ENCODE measurements at regions of chr6 and their contacts with region 1.

Region 1: DNA sequence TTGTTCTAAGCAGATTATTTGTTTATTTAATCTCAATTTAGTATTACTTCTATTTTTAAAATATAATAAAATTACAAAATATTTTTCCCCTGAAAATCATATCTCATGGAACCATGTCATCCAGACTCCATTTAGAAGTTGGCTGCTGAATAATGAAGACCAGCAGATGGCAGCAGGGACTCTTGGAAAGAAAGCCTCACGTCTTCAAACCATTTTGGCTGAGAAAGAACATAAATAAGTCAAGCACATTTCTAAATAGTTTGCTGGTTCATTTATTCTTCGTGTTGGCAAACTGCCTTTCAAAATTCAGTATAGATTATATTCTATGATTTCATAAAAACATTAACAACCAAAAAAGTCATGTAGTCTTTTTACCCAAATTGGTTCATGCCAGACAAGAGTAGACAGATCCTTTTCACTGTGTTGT is 71.7 kb downstream of the RCAN2 start:
- DNase-seq: peak; percentile 66
- ATAC-seq: 0 out of 3 replicates have a peak, but pooled peaks have one; percentile 44
- H3K4me3 ChIP-seq: no peak overlapping the region
- H3K27ac ChIP-seq: no peak overlapping the region
- H3K4me1 ChIP-seq: no peaks in the 10 kb centered on the region
- H3K27me3 ChIP-seq: no peaks in the 10 kb centered on the region
- CTCF ChIP-seq: peak; percentile 74
- EP300 ChIP-seq: no peak
- POLR2A ChIP-seq: no peak
- RAD21 ChIP-seq: peak; percentile 49; the same call in 1 of the 2 replicates

Region 2: DNA sequence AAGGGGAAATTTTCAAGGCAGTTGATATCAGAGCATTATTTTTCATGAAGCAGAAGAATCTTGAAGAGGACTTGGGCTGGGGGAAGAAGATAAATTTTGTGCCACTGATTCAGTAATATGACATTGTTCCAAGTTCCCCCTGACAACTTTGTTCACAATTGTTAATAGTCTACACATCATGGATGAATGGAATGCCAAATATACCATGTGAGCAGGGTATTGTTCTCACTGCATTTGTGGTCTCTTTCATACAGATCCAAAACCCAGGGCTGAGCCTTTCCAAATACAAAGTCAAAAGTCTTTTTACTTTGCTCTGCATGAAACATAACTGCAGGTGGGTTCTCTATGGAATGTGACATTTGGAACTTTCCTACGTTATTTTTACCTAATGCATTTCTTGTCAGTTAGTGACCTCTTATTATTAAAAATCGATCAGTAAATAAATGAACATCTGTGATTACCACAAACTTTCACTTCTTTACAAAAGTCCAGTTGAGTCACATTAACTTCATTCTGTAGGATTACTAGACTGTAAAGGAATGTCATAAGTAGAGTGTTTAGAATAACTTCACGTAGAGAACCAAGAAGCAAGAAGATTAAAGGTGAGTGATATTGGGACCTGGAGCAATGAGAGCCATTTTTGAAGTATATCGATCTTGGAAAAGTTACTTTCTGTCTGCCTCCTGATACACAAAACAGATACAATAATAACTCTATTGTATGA is 29.3 kb before region 1 on chr6:
- CTCF ChIA-PET with region 1: no interaction called
- POLR2A ChIA-PET with region 1: no interaction called
- in situ Hi-C with region 1: no loop called
- intact Hi-C with region 1: no loop called
- DNase-seq: no peak
- ATAC-seq: no peak
- H3K4me3 ChIP-seq: no peak overlapping the region
- H3K27ac ChIP-seq: no peak overlapping the region
- H3K4me1 ChIP-seq: no peaks in the 10 kb centered on the region
- H3K27me3 ChIP-seq: no peaks in the 10 kb centered on the region
- CTCF ChIP-seq: no peak
- EP300 ChIP-seq: no peak
- POLR2A ChIP-seq: no peak
- RAD21 ChIP-seq: no peak

Region 3: DNA sequence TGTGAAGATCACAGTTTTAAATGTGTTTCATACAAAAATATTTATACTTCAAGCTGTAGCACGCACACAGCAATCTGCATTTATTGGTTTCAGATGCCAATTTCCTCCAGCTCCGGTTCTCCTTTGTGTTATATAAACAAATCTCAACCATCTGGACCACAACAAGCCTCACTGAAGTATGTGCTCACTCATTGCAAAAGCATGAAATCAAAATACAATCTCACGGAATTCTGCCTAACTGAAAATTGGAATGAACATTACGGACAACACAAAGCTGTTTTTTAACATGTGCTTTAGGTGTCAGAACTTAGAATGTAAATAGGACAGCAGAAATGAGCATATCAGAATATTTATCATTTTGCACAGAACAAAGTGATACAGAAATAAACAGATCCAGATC is 33.6 kb after region 1 on chr6:
- CTCF ChIA-PET with region 1: no interaction called
- POLR2A ChIA-PET with region 1: no interaction called
- in situ Hi-C with region 1: no loop called
- intact Hi-C with region 1: no loop called
- DNase-seq: no peak
- ATAC-seq: no peak
- H3K4me3 ChIP-seq: no peak overlapping the region
- H3K27ac ChIP-seq: no peak overlapping the region
- H3K4me1 ChIP-seq: no peaks in the 10 kb centered on the region
- H3K27me3 ChIP-seq: no peaks in the 10 kb centered on the region
- CTCF ChIP-seq: no peak
- EP300 ChIP-seq: no peak
- POLR2A ChIP-seq: no peak
- RAD21 ChIP-seq: no peak

Region 4: GRCh38 chr6:46491628-46492547 is 72.3 kb after region 1 on chr6:
- CTCF ChIA-PET with region 1: interaction called, 3 read pairs
- POLR2A ChIA-PET with region 1: no interaction called
- in situ Hi-C with region 1: no loop called
- intact Hi-C with region 1: loop called (anchors 1 kb)
- DNase-seq: peak; percentile 6
- ATAC-seq: peak; percentile 95
- H3K4me3 ChIP-seq: peak overlapping the region; percentile 50 to 75 (median 73)
- H3K27ac ChIP-seq: no peak overlapping the region
- H3K4me1 ChIP-seq: peaks cover 5% of the 10 kb centered on the region
- H3K27me3 ChIP-seq: peaks cover 4 to 33% of the 10 kb centered on the region in 2 experiments; a peak in 4 of 5 replicates
- CTCF ChIP-seq: peak; percentile 72
- EP300 ChIP-seq: no peak
- POLR2A ChIP-seq: no peak
- RAD21 ChIP-seq: peak; percentile 48; the same call in 1 of the 2 replicates

Region 5: DNA sequence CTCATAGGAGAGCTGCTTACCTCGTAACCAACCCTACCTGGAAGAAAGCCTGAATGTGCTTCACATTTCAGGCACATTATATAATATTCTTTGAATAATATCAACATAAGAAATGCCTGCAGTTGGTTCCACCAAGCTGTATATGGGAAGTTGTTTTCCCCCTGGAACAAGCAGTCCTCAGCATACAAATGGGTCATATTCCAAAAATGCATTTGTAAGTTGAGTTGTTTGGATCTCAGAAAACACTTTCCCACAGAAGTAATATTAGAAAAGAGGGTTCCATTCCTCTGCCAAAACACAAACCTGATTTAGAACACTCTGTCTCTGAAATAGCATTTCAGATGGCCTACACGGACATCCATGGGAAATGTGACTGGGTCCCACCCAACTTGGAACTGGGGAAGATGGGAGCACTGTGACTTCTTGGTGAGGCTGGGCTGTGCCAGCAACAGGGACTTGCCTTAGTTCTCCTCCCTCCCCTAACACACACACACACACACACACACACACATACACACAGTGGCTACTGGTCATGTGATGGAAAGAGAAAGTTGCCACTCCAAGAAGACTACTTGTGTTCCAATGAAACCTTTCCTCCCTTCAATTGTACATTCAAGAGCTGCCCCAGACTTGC is 83.0 kb after region 1 on chr6:
- CTCF ChIA-PET with region 1: no interaction called
- POLR2A ChIA-PET with region 1: no interaction called
- in situ Hi-C with region 1: no loop called
- intact Hi-C with region 1: no loop called
- DNase-seq: no peak
- ATAC-seq: no peak
- H3K4me3 ChIP-seq: no peak overlapping the region
- H3K27ac ChIP-seq: no peak overlapping the region
- H3K4me1 ChIP-seq: no peaks in the 10 kb centered on the region
- H3K27me3 ChIP-seq: no peaks in the 10 kb centered on the region
- CTCF ChIP-seq: no peak
- EP300 ChIP-seq: no peak
- POLR2A ChIP-seq: no peak
- RAD21 ChIP-seq: no peak

Region 6: DNA sequence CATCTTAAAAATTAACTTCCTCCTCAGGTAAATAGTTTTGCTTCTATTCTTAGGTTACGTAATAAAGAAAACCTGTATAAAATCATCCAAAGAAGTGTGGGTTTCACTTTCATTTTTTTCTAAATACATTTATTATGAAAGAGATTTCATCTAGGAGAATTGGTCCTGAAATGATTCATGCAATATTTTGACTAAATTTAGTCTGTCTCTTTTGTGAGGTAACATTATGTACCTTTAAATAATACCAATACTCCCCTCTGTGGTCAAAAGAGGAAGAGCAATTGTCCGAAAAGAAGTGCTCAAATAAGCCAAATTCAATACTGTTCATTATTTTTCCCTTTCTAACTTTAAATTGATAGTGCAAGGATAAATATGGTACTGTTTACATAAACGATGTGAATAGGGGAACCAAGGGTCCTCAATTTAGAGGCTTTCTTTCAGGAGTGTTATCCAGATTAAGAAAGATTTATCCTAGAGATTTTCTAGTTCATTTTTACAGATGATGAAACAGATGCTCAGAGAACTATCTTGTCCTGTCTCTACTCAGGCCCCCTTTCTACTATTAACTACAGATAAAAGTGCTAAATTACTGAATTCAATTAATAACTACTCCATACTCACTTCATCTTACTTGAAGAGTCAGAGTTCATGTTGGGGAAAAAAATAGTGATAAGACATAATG is 206.8 kb after region 1 on chr6:
- CTCF ChIA-PET with region 1: interaction called, 26 read pairs
- POLR2A ChIA-PET with region 1: no interaction called
- in situ Hi-C with region 1: loop called (anchors 10 kb)
- intact Hi-C with region 1: loop called (anchors 1 kb)
- DNase-seq: peak; percentile 33
- ATAC-seq: peak; percentile 58
- H3K4me3 ChIP-seq: no peak overlapping the region
- H3K27ac ChIP-seq: no peak overlapping the region
- H3K4me1 ChIP-seq: no peaks in the 10 kb centered on the region
- H3K27me3 ChIP-seq: no peaks in the 10 kb centered on the region
- CTCF ChIP-seq: peak; percentile 63
- EP300 ChIP-seq: no peak
- POLR2A ChIP-seq: no peak
- RAD21 ChIP-seq: no peak

Region 7: GRCh38 chr6:46637145-46637544 is 217.6 kb after region 1 on chr6:
- CTCF ChIA-PET with region 1: no interaction called
- POLR2A ChIA-PET with region 1: no interaction called
- in situ Hi-C with region 1: loop called (anchors 10 kb)
- intact Hi-C with region 1: no loop called
- DNase-seq: no peak
- ATAC-seq: no peak
- H3K4me3 ChIP-seq: no peak overlapping the region
- H3K27ac ChIP-seq: no peak overlapping the region
- H3K4me1 ChIP-seq: no peaks in the 10 kb centered on the region
- H3K27me3 ChIP-seq: no peaks in the 10 kb centered on the region
- CTCF ChIP-seq: no peak
- EP300 ChIP-seq: no peak
- POLR2A ChIP-seq: no peak
- RAD21 ChIP-seq: no peak

Region 8: DNA sequence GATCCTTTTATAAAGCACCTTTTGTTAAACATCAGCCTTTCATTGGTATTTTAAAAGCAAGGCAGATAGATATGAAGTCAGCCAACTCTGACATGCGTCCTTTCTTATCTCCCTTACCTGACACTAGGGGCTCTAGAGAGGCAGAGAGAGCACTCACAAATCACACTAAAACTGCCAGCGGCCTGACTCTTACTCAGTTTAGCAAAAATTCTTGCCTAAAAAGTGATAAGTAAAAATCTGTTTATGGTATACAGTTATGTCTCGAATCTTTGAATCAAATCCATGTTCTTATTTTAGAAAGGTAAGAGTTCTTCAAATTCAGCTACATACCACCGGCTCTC is 257.7 kb after region 1 on chr6:
- CTCF ChIA-PET with region 1: no interaction called
- POLR2A ChIA-PET with region 1: no interaction called
- in situ Hi-C with region 1: no loop called
- intact Hi-C with region 1: loop called (anchors 1 kb)
- DNase-seq: peak; percentile 16
- ATAC-seq: peak; percentile 87
- H3K4me3 ChIP-seq: no peak overlapping the region
- H3K27ac ChIP-seq: no peak overlapping the region
- H3K4me1 ChIP-seq: no peaks in the 10 kb centered on the region
- H3K27me3 ChIP-seq: no peaks in the 10 kb centered on the region
- CTCF ChIP-seq: peak; percentile 33
- EP300 ChIP-seq: no peak
- POLR2A ChIP-seq: no peak
- RAD21 ChIP-seq: no peak

Region 9: GRCh38 chr6:46993846-46994245 is 574.3 kb after region 1 on chr6:
- CTCF ChIA-PET with region 1: interaction called, 21 read pairs
- POLR2A ChIA-PET with region 1: no interaction called
- in situ Hi-C with region 1: loop called (anchors 5 kb)
- intact Hi-C with region 1: no loop called
- DNase-seq: peak; percentile 28
- ATAC-seq: no peak
- H3K4me3 ChIP-seq: no peak overlapping the region
- H3K27ac ChIP-seq: no peak overlapping the region
- H3K4me1 ChIP-seq: peaks cover 8% of the 10 kb centered on the region; the same call in 1 of the 2 replicates
- H3K27me3 ChIP-seq: peaks cover 0 to 26% of the 10 kb centered on the region in 2 experiments; a peak in 2 of 5 replicates
- CTCF ChIP-seq: no peak
- EP300 ChIP-seq: no peak
- POLR2A ChIP-seq: no peak
- RAD21 ChIP-seq: no peak

Measured in HepG2 (cell line).